Heart left ventricle (tissue), 16 donors: ENCODE measurements at regions of chr9 and their contacts with region 1.

Region 1: GRCh38 chr9:74348777-74349176 is 148.4 kb upstream of the RORB start:
- DNase-seq: no peak
- ATAC-seq: no peak
- H3K4me3 ChIP-seq: no peak overlapping the region
- H3K27ac ChIP-seq: no peak overlapping the region
- H3K4me1 ChIP-seq: no peaks in the 10 kb centered on the region
- H3K27me3 ChIP-seq: no peaks in the 10 kb centered on the region
- CTCF ChIP-seq: no peak
- POLR2A ChIP-seq: no peak

Region 2: DNA sequence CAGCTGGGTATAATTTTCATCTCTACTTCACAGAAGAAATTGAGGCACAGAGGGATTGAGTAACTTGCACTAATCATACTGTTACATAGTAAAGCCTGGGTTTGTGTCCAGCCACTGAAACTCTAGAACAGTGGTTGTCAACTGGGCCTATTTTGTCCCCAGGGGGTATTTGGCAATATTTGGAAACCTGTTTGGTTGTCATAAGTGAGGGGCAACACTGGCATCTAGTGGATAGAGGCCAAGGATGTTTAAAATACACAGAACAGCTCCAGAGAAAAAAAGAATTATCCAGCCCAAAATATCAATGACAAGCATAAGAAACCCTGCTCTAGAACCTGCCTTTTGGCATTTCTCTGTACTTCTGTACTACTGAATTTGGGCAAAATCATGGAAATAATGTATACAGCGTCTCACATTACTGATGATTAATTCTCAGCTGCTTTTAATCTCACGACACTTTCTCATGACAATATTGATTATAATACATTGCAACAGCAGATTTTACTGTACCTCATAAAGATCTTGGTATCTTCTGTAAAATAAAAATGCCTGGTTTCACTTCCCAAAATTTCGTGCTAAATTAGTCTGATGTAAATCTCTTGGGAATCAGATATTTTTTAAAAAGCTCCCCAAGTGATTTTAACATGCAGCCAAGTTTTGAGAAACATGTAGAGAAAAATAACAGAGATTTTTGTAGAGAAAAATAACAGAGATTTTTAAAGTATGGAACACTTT is 261.1 kb after region 1 on chr9:
- intact Hi-C with region 1: loop called in 1 of 10 experiments (anchors 10 kb)
- DNase-seq: no peak
- ATAC-seq: no peak
- H3K4me3 ChIP-seq: no peak overlapping the region
- H3K27ac ChIP-seq: no peak overlapping the region
- H3K4me1 ChIP-seq: no peaks in the 10 kb centered on the region
- H3K27me3 ChIP-seq: no peaks in the 10 kb centered on the region
- CTCF ChIP-seq: no peak
- POLR2A ChIP-seq: no peak